HepG2 (cell line): ENCODE measurements at regions of chr5 and their contacts with region 1.

Region 1: DNA sequence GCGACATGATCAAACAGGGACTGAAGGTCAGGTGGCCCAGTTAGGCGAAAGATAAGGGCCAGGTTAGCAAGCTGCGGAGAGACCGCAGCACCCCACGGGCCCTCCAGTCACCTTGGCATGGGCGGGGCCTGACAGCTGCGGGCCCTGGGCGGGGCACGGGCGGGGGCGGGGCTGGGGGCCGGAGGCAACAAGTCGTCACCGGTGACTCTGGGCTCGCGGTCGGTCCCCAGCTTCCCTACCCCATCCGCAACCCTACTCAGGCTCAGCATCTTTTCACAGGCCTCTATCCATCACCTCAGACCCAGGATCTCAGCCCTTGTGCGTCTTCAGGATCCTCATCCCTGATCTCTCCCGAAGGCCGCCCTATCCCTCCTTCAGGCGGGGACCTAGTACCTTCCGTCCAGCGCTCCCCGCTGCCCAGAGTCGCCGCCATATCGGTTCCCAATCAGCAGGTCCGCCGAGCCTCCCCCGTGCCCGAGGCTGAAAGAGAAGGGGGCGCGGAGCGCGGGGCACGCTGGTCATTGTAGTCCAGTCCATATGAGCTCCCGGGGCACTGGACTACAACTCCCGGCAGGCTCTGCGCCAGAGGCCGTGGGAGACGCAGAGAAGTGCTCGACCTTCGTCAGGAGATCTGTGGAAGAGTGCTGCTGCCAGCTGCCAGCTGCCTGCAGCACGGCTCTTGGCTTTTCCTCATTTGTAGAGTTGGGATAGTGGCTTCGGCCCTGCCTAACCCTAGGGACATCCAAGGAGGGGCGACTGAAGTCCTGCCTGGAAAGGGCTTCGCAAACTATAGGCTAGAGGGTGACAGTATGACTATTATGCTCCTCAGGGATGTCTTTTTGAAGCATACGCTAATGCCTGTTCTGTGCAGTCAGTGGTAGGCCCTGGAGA is at the start of gene DNAJC18:
- DNase-seq: peak; percentile 81
- ATAC-seq: peak; percentile 97
- H3K4me3 ChIP-seq: peak within 1 kb of the TSS; percentile 89 to 98 (median 89)
- H3K27ac ChIP-seq: peak within 1 kb of the TSS; percentile 73
- H3K4me1 ChIP-seq: peaks cover 15% of the 10 kb centered on the region
- H3K27me3 ChIP-seq: 0 out of 5 replicates have a peak, but pooled peaks cover 0 to 7% of the 10 kb centered on the region in 2 experiments
- CTCF ChIP-seq: 0 out of 2 replicates have a peak, but pooled peaks have one; percentile 30
- EP300 ChIP-seq: no peak
- POLR2A ChIP-seq: peak; percentile 35 to 80; a peak in 3 of 4 replicates
- RAD21 ChIP-seq: 0 out of 2 replicates have a peak, but pooled peaks have one; percentile 19
- total RNA-seq, gene DNAJC18: 6.5 and 9.6 TPM in 2 replicates

Region 2: DNA sequence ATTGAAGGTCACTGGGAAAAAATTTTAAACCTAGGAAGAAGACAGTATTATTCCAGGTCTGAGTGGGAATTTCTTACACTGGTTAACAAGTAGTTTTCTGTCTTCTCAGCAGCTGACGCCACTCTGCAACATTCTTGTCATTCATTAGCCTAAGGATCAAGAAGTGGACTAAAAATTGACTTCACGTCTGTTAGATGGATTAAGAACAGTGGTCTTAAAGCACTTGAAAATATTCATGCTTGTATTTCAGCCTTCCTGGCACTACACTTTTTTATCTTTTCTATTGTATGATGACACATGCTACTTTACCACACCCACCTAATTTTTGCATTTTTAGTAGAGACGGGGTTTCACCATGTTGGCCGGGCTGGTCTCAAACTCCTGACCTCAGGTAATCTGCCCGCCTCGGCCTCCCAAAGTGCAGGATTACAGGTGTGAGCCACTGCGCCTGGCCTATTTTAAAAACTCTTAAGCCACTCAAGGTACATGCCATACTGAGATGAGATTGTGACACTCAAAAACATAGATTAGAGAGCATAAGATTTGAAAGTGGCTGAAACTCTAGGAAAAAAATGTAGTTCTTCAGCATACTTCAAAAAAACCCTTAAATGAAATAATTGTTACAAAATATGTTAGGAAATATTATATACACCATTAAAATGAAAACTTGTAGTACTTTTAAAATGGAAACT is 137.3 kb before region 1 on chr5:
- CTCF ChIA-PET with region 1: no interaction called
- POLR2A ChIA-PET with region 1: no interaction called
- in situ Hi-C with region 1: no loop called
- intact Hi-C with region 1: no loop called
- DNase-seq: no peak
- ATAC-seq: no peak
- H3K4me3 ChIP-seq: no peak overlapping the region
- H3K27ac ChIP-seq: no peak overlapping the region
- H3K4me1 ChIP-seq: peaks cover 98% of the 10 kb centered on the region
- H3K27me3 ChIP-seq: no peaks in the 10 kb centered on the region
- CTCF ChIP-seq: no peak
- EP300 ChIP-seq: no peak
- POLR2A ChIP-seq: no peak
- RAD21 ChIP-seq: no peak

Region 3: DNA sequence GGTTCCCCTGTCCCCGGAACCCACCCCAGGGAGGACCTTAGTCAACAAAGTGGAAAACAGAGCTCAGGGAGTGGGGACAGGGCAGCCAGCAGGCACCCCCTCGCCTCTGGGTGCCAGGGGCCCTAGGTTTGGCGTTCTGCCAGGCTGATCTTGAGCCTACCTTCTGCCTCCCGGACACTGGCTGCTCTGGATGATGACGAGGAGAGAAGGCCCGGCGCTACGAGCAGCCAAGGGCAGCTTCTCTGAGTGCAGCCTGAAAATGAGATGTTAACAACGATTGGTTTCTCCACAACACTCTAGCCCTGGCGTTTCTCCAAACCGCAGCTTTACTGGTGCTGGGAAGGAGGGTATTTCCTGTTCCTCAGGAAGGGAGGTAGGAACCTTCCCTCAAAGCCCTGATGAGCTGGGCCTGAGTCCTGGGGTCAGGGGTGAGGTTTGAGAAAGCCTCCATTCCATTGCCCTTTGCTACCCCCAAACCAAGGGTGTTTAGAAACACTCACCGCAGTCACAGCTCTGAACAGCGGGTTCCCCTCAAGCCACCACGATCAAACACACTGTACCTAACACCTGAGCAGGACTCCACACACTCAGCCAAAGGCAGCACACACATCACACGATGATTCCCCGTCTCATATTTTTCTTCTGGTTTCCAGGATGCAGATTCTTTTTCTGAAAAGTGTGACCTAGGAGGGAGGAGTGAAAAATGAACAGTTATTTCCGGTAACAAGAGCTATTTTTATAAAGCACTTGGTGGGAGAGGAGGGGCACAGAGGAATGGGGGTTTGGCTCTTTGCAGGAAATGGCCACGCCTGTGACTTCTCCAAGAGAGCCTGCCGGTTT is 43.0 kb after region 1 on chr5 and contains the start of gene STING1:
- CTCF ChIA-PET with region 1: no interaction called
- POLR2A ChIA-PET with region 1: interaction called, 14 read pairs
- in situ Hi-C with region 1: no loop called
- intact Hi-C with region 1: no loop called
- DNase-seq: peak; percentile 63
- ATAC-seq: peak; percentile 66
- H3K4me3 ChIP-seq: peak within 1 kb of the TSS; percentile 37 to 60 (median 44)
- H3K27ac ChIP-seq: no peak within 1 kb of the TSS
- H3K4me1 ChIP-seq: peaks cover 22% of the 10 kb centered on the region
- H3K27me3 ChIP-seq: peaks cover 0 to 3% of the 10 kb centered on the region in 2 experiments; a peak in 2 of 5 replicates
- CTCF ChIP-seq: no peak
- EP300 ChIP-seq: no peak
- POLR2A ChIP-seq: no peak
- RAD21 ChIP-seq: no peak
- total RNA-seq, gene STING1: 0.56 and 1.3 TPM in 2 replicates

Region 4: DNA sequence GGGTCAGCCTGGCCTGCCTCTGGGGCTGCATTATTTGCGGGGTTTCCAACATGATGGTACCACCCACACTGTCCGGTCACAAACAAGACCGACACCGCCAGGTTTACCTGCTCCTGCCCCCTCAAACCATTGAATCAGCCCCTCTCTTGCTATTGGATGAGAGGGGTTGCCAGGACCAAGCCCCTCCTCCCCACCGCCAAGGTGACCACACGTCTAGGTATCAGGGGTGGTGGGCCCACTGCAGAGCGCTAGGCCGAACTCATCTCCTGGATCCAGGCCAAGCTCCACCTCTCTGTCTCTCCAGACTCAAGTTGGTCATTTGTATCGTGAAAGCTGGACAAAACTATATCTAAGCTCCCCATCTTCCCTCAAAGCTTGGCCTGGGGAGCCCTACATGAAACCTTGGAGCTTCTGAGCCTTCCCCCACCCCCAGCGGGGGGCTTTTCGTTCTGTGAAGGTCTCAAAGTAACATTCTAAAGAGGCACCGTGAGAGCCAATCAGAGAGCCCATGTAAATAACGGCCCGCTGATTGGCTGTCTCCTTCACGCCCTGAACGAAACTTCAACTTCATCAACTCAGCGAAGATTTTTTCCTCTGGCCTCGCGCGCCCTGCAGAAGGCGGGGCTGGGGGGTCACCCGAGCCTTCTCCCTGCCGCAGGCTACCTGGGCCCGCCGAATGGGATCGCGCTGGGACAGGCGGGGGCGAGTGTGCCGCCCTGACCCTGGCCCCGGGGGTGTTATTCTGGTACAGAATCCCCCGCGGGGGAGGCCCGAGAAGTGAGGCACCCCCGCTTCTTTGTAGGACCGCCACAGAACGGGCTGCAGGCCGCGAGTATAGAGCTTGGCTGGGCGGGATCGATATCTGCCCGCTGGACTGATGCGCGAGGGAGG is 306.8 kb after region 1 on chr5:
- CTCF ChIA-PET with region 1: no interaction called
- POLR2A ChIA-PET with region 1: no interaction called
- in situ Hi-C with region 1: no loop called
- intact Hi-C with region 1: loop called (anchors 10 kb)
- DNase-seq: peak; percentile 85
- ATAC-seq: peak; percentile 77
- H3K4me3 ChIP-seq: peak overlapping the region; percentile 49 to 73 (median 55); a peak in 5 of 6 replicates
- H3K27ac ChIP-seq: peak overlapping the region; percentile 14
- H3K4me1 ChIP-seq: peaks cover 88% of the 10 kb centered on the region
- H3K27me3 ChIP-seq: peaks cover 0 to 14% of the 10 kb centered on the region in 2 experiments; a peak in 2 of 5 replicates
- CTCF ChIP-seq: no peak
- EP300 ChIP-seq: no peak
- POLR2A ChIP-seq: no peak
- RAD21 ChIP-seq: no peak